ENCODE measurements at regions of chr17 and their contacts with region 1.

Region 1: DNA sequence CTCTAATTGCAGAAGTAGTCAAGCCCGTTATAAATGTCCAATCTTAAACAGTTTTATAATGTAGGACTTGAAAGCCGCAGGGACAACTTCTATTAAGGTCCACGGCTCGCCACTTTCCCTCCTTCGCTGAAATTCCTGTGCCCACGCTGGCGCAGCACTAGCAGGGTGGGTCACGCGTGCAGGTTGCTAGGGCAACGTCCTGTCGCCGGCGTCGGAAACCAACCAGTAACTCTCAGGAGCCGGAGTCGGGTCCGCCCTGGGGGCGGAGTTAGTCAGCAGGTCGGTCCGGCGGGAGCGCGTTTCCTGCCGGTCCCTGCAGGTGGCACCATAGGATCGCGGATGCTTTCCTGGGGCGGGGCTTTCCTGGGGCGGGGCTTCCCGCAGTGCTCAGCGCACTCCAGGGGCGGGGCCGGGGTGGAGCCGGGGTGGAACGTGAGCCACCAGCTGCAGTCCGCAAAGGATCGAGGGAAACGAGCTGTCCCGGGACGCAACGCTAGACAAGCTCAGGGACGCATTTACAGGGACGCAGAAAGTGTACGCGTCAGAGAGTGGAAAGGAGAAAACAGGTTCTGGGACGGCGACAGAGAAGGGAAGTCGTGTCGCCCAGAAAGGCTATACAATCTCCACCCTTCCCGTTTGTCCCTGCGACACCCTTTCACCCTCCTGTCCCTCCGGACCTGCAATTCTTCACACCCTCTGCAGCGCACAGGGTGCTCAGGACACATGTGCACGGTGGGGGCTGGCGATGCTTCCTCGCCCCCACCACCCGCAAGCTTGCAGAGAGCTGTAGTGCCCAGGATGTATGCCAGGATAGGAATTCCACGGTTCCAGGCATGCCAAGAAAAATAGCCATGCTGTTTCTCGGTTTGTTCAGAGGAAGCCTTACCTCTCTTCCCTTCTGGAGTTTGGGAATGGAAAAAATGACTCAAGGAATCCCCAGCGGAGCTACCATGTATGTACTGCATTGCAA is 12.4 kb downstream of the COPZ2 start:
- DNase-seq: peak; percentile 97
- ATAC-seq: peak; percentile 89
- H3K4me3 ChIP-seq: peak overlapping the region; percentile 40 to 76 (median 69)
- H3K4me3 Mint-ChIP-seq: peak overlapping the region; percentile 82
- H3K27ac ChIP-seq: peak overlapping the region; percentile 38 to 55
- H3K27ac Mint-ChIP-seq: peak overlapping the region; percentile 87
- H3K4me1 ChIP-seq: peaks cover 32 to 36% of the 10 kb centered on the region in 2 donors
- H3K4me1 Mint-ChIP-seq: peaks cover 35% of the 10 kb centered on the region
- H3K27me3 ChIP-seq: peaks cover 0 to 45% (median 15%) of the 10 kb centered on the region in 4 experiments
- H3K27me3 Mint-ChIP-seq: peaks cover 19% of the 10 kb centered on the region
- CTCF ChIP-seq: peak; percentile 68

Region 2: GRCh38 chr17:47840740-47841603 is 184.2 kb before region 1 on chr17 and contains the start of gene SCRN2:
- CTCF ChIA-PET with region 1: interaction called, 3 read pairs
- POLR2A ChIA-PET with region 1: no interaction called
- intact Hi-C with region 1: loop called (anchors 2 kb)
- DNase-seq: peak; percentile 90
- ATAC-seq: peak; percentile 94
- H3K4me3 ChIP-seq: peak within 1 kb of the TSS; percentile 58 to 87 (median 79)
- H3K4me3 Mint-ChIP-seq: peak within 1 kb of the TSS; percentile 97
- H3K27ac ChIP-seq: peak within 1 kb of the TSS; percentile 26 to 75
- H3K27ac Mint-ChIP-seq: peak within 1 kb of the TSS; percentile 89
- H3K4me1 ChIP-seq: peaks cover 10 to 18% of the 10 kb centered on the region in 2 donors
- H3K4me1 Mint-ChIP-seq: peaks cover 26% of the 10 kb centered on the region
- H3K27me3 ChIP-seq: peaks cover 0 to 23% (median 12%) of the 10 kb centered on the region in 4 experiments
- H3K27me3 Mint-ChIP-seq: peaks cover 20% of the 10 kb centered on the region
- CTCF ChIP-seq: peak; percentile 94
- total RNA-seq, gene SCRN2: 47.8 and 53.8 TPM in 2 replicates

Region 3: DNA sequence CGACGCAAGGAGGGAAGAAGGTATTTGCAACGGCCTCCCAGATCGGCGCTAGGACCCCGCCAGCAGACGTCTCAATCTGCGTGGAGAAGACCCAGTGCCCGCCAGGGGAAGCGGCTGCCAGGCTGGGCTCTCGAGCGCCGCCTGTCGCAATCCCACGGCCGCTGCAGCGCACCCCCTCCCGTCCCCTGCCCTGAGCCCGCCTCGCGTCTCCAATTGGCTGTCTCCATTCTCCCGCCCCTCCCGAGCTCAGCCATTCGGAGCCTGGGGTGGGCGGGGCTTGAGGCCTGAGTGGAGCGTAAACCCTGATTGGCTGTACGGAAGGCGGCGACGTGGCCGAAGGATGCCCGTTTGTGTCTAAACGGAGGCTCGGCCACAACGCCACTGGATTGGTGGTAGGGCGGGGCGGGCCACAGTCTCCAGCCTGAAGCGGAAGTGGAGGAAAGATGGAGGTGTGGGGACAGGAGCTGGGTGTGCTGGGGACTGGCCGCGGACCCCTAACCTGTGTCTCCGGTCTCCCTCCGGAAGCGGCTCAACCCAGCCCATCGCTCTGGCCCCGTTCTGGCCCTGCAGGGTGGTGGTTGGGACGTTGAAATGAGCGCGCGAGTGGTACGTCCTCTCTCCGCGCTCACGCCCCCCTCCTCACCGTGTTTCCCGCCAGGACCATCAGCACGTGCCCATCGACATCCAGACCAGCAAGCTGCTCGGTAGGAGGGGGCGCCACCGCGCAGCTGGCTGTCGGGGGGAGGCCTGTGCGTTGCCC is 54.3 kb before region 1 on chr17 and contains the start of gene CDK5RAP3:
- CTCF ChIA-PET with region 1: interaction called, 12 read pairs
- POLR2A ChIA-PET with region 1: no interaction called
- intact Hi-C with region 1: loop called (anchors 2 kb)
- DNase-seq: peak; percentile 99
- ATAC-seq: peak; percentile 98
- H3K4me3 ChIP-seq: peak within 1 kb of the TSS; percentile 79 to 99 (median 94)
- H3K4me3 Mint-ChIP-seq: peak within 1 kb of the TSS; percentile 98
- H3K27ac ChIP-seq: peak within 1 kb of the TSS; percentile 82 to 83
- H3K27ac Mint-ChIP-seq: peak within 1 kb of the TSS; percentile 95
- H3K4me1 ChIP-seq: peaks cover 19 to 28% of the 10 kb centered on the region in 2 donors
- H3K4me1 Mint-ChIP-seq: peaks cover 26% of the 10 kb centered on the region
- H3K27me3 ChIP-seq: no peaks in the 10 kb centered on the region
- H3K27me3 Mint-ChIP-seq: no peaks in the 10 kb centered on the region
- CTCF ChIP-seq: peak; percentile 95
- total RNA-seq, gene CDK5RAP3: 415 and 417 TPM in 2 replicates

Region 4: GRCh38 chr17:48037036-48037837 is 12.0 kb after region 1 on chr17 and contains the start of gene COPZ2:
- CTCF ChIA-PET with region 1: interaction called, 31 read pairs
- POLR2A ChIA-PET with region 1: interaction called, 3 read pairs
- intact Hi-C with region 1: loop called (anchors 1 kb)
- DNase-seq: peak; percentile 79
- ATAC-seq: peak; percentile 96
- H3K4me3 ChIP-seq: peak within 1 kb of the TSS; percentile 12 to 76 (median 70)
- H3K4me3 Mint-ChIP-seq: peak within 1 kb of the TSS; percentile 90
- H3K27ac ChIP-seq: no peak within 1 kb of the TSS
- H3K27ac Mint-ChIP-seq: peak within 1 kb of the TSS; percentile 60
- H3K4me1 ChIP-seq: peaks cover 15% of the 10 kb centered on the region in 2 donors
- H3K4me1 Mint-ChIP-seq: peaks cover 15% of the 10 kb centered on the region
- H3K27me3 ChIP-seq: peaks cover 0 to 38% (median 9%) of the 10 kb centered on the region in 4 experiments
- H3K27me3 Mint-ChIP-seq: peaks cover 24% of the 10 kb centered on the region
- CTCF ChIP-seq: peak; percentile 94
- total RNA-seq, gene COPZ2: 1.2 and 2.3 TPM in 2 replicates

Region 5: DNA sequence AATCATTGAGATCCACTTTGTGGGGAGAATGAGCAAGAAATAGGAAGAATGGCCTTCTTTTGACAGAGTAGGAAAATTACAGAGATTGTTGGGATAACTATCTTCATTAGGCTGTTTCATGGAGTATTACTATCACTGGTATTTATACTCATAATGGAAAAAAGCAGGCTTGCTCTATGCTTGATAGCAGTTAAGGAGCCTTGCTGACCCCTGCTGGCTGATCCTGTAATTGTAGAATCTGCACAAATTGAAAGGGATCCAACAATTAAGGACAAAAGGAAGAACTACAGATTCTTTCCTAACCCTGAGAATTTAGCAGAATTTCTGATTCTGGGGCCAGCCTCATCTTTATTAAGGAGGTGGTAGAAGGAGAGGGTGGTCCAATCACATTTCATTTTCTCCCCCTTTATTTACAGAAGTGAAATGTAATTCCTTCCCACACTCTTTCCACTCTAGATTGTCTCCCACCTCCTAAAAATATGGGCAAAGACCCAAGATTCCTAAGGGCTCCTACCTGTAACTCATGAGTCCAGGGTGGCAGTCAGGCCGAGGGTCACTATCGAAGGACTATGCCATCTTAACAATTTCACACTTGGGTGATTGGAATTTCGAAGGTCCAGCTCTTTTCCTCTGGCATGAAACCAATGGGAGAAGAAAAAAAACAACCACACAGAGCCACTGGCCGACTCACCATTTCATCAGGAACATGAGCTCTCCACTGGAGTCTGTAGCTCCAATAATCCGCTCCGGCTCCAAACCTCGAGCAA is 49.3 kb after region 1 on chr17:
- CTCF ChIA-PET with region 1: interaction called, 228 read pairs
- POLR2A ChIA-PET with region 1: no interaction called
- intact Hi-C with region 1: loop called (anchors 1 kb)
- DNase-seq: peak; percentile 81
- ATAC-seq: peak; percentile 77
- H3K4me3 ChIP-seq: no peak overlapping the region
- H3K4me3 Mint-ChIP-seq: no peak overlapping the region
- H3K27ac ChIP-seq: no peak overlapping the region
- H3K27ac Mint-ChIP-seq: no peak overlapping the region
- H3K4me1 ChIP-seq: no peaks in the 10 kb centered on the region
- H3K4me1 Mint-ChIP-seq: no peaks in the 10 kb centered on the region
- H3K27me3 ChIP-seq: no peaks in the 10 kb centered on the region
- H3K27me3 Mint-ChIP-seq: no peaks in the 10 kb centered on the region
- CTCF ChIP-seq: peak; percentile 90

Region 6: GRCh38 chr17:48107168-48108132 is 82.2 kb after region 1 on chr17 and contains the start of gene SNX11:
- CTCF ChIA-PET with region 1: interaction called, 24 read pairs
- POLR2A ChIA-PET with region 1: no interaction called
- intact Hi-C with region 1: no loop called
- DNase-seq: peak; percentile 94
- ATAC-seq: peak; percentile 78
- H3K4me3 ChIP-seq: peak within 1 kb of the TSS; percentile 71 to 96 (median 79)
- H3K4me3 Mint-ChIP-seq: peak within 1 kb of the TSS; percentile 91
- H3K27ac ChIP-seq: peak within 1 kb of the TSS; percentile 88 to 94
- H3K27ac Mint-ChIP-seq: peak within 1 kb of the TSS; percentile 97
- H3K4me1 ChIP-seq: peaks cover 46 to 61% of the 10 kb centered on the region in 2 donors
- H3K4me1 Mint-ChIP-seq: peaks cover 58% of the 10 kb centered on the region
- H3K27me3 ChIP-seq: no peaks in the 10 kb centered on the region
- H3K27me3 Mint-ChIP-seq: no peaks in the 10 kb centered on the region
- CTCF ChIP-seq: no peak
- total RNA-seq, gene SNX11: 42.0 and 47.1 TPM in 2 replicates

Region 7: GRCh38 chr17:48335858-48336500 is 310.8 kb after region 1 on chr17:
- CTCF ChIA-PET with region 1: interaction called, 7 read pairs
- POLR2A ChIA-PET with region 1: no interaction called
- intact Hi-C with region 1: loop called (anchors 10 kb)
- DNase-seq: peak; percentile 79
- ATAC-seq: peak; percentile 47
- H3K4me3 ChIP-seq: no peak overlapping the region
- H3K4me3 Mint-ChIP-seq: no peak overlapping the region
- H3K27ac ChIP-seq: no peak overlapping the region
- H3K27ac Mint-ChIP-seq: no peak overlapping the region
- H3K4me1 ChIP-seq: no peaks in the 10 kb centered on the region
- H3K4me1 Mint-ChIP-seq: no peaks in the 10 kb centered on the region
- H3K27me3 ChIP-seq: no peaks in the 10 kb centered on the region
- H3K27me3 Mint-ChIP-seq: peaks cover 4% of the 10 kb centered on the region
- CTCF ChIP-seq: peak; percentile 91

Measured in B cell (primary cell).